ENCODE measurements at regions of chr5 and their contacts with region 1.

Region 1: GRCh38 chr5:139968547-139969261 is 74.4 kb downstream of the NRG2 start:
- DNase-seq: peak; percentile 92
- H3K4me3 Mint-ChIP-seq: no peak overlapping the region
- H3K27ac Mint-ChIP-seq: no peak overlapping the region
- H3K4me1 Mint-ChIP-seq: no peaks in the 10 kb centered on the region
- H3K27me3 Mint-ChIP-seq: peaks cover 4% of the 10 kb centered on the region

Region 2: DNA sequence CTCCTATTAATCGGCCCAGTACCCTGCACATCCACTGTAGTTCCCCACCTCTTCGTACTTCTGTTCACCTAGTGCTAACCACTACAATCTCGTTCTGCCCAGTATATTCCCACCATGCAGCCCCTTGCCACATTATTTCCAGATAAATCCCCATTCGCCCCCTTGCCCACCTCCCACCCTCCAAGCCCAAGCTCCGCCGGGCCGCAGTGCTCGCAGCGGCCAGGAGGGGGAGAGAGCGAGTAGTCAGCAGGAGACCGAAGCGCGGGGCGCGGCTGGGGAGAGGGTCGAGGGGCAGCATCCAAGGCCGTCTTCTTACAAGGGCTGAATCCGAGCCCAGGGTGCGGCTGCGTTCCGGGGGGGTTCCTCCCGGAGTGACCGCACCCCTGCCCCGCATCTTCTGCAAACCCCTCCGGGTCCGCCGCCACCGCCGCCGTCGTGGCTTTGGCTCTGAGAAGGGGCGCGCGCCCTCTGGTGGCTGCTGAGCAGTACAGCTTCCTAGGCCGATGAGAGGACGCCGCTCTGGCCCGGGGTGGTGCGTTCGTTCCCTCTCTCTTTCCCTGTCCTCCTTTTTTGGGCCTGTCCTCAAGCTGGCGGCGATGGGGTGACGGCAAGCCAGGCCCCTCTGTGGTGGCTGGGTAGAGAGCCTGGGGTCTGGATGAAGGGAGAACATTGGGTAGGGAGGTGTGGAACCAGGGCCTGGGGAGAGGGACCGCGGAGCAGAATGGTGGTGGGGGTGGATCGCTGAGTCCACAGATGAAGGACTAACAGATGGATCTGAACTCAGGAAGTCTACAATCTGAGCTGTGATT is 203.1 kb before region 1 on chr5:
- CTCF ChIA-PET with region 1: interaction called, 12 read pairs
- POLR2A ChIA-PET with region 1: no interaction called
- intact Hi-C with region 1: no loop called
- DNase-seq: peak; percentile 86
- H3K4me3 Mint-ChIP-seq: peak overlapping the region; percentile 50
- H3K27ac Mint-ChIP-seq: no peak overlapping the region
- H3K4me1 Mint-ChIP-seq: peaks cover 15% of the 10 kb centered on the region
- H3K27me3 Mint-ChIP-seq: peaks cover 31% of the 10 kb centered on the region

Region 3: GRCh38 chr5:139844472-139845145 is 124.1 kb before region 1 on chr5:
- CTCF ChIA-PET with region 1: interaction called, 18 read pairs
- POLR2A ChIA-PET with region 1: no interaction called
- intact Hi-C with region 1: no loop called
- DNase-seq: peak; percentile 82
- H3K4me3 Mint-ChIP-seq: peak overlapping the region; percentile 2
- H3K27ac Mint-ChIP-seq: peak overlapping the region; percentile 8
- H3K4me1 Mint-ChIP-seq: peaks cover 8% of the 10 kb centered on the region
- H3K27me3 Mint-ChIP-seq: peaks cover 22% of the 10 kb centered on the region

Region 4: DNA sequence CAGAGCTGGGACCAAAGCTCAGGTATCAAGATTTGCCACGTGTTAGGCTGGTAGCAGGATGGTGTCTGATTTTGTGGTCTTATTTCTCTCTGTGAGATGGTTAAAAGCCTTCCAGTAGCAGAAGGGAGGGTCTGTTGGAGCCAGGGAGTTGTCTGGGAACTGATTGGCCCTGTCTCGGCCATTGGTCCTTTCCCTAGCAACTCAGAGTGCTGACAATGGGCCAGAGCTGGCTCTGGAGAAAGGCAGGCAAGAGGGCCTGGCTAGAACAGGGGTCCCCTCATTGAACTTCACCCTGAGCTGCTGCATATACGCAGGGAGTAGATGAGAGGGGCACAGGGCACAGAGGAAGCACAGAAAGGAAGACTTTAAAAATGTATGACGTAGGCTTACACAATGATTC is 80.3 kb before region 1 on chr5:
- CTCF ChIA-PET with region 1: interaction called, 12 read pairs
- POLR2A ChIA-PET with region 1: no interaction called
- intact Hi-C with region 1: loop called (anchors 5 kb)
- DNase-seq: no peak
- H3K4me3 Mint-ChIP-seq: no peak overlapping the region
- H3K27ac Mint-ChIP-seq: no peak overlapping the region
- H3K4me1 Mint-ChIP-seq: no peaks in the 10 kb centered on the region
- H3K27me3 Mint-ChIP-seq: peaks cover 10% of the 10 kb centered on the region

Region 5: GRCh38 chr5:139942243-139942642 is 26.5 kb before region 1 on chr5:
- CTCF ChIA-PET with region 1: interaction called, 11 read pairs
- POLR2A ChIA-PET with region 1: no interaction called
- intact Hi-C with region 1: no loop called
- DNase-seq: no peak
- H3K4me3 Mint-ChIP-seq: no peak overlapping the region
- H3K27ac Mint-ChIP-seq: no peak overlapping the region
- H3K4me1 Mint-ChIP-seq: no peaks in the 10 kb centered on the region
- H3K27me3 Mint-ChIP-seq: peaks cover 36% of the 10 kb centered on the region

Region 6: GRCh38 chr5:139994234-139994633 is 25.5 kb after region 1 on chr5:
- CTCF ChIA-PET with region 1: interaction called, 16 read pairs
- POLR2A ChIA-PET with region 1: no interaction called
- intact Hi-C with region 1: no loop called
- DNase-seq: no peak
- H3K4me3 Mint-ChIP-seq: no peak overlapping the region
- H3K27ac Mint-ChIP-seq: no peak overlapping the region
- H3K4me1 Mint-ChIP-seq: no peaks in the 10 kb centered on the region
- H3K27me3 Mint-ChIP-seq: peaks cover 26% of the 10 kb centered on the region

Region 7: GRCh38 chr5:140157032-140157803 is 188.5 kb after region 1 on chr5:
- CTCF ChIA-PET with region 1: interaction called, 16 read pairs
- POLR2A ChIA-PET with region 1: no interaction called
- intact Hi-C with region 1: loop called (anchors 1 kb)
- DNase-seq: peak; percentile 92
- H3K4me3 Mint-ChIP-seq: peak overlapping the region; percentile 2
- H3K27ac Mint-ChIP-seq: no peak overlapping the region
- H3K4me1 Mint-ChIP-seq: peaks cover 10% of the 10 kb centered on the region
- H3K27me3 Mint-ChIP-seq: no peaks in the 10 kb centered on the region

Measured in activated CD4-positive, alpha-beta memory T cell treated with anti-CD3 and anti-CD28 coated beads for 36 hours (primary cell).